HCT116 (cell line): ENCODE measurements at regions of chr18 and their contacts with region 1.

Region 1: GRCh38 chr18:11040823-11041656 is 108.3 kb downstream of the PIEZO2 start:
- DNase-seq: peak; percentile 22
- ATAC-seq: peak; percentile 55; the same call in 1 of the 2 replicates
- H3K4me3 ChIP-seq: no peak overlapping the region
- H3K27ac ChIP-seq: no peak overlapping the region
- H3K4me1 ChIP-seq: no peaks in the 10 kb centered on the region
- H3K27me3 ChIP-seq: peaks cover 15% of the 10 kb centered on the region
- CTCF ChIP-seq: peak; percentile 13 to 57 (median 57); a peak in 5 of 6 replicates
- POLR2A ChIP-seq: no peak
- RAD21 ChIP-seq: peak; percentile 40; the same call in 1 of the 2 replicates

Region 2: DNA sequence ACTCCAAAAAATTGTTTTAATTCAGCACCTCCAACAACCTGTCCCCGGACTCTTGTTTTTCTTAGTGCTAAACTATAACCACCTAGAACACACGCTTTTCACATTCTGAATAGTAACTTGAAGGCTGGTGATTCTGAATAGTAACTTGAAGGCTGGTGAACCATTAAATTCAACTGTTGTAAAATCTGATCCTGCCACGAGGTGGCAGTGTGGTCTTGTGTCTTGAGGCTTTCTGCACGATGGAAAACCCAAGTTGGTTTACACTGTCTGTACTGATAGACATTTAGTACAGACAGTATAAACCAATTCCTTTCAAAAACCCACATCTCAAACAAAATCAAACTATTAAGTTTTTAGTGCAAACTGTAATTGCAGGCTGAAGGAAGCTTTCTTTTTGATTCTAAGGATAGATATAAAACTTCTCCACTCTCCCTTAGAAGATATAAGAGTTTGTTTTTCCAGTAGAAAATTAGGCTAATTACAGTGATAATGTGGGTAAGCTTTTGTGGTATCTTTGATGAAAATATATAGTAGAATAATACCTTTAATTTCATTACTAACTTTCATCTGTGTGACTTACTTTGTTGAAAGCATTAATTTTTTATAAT is 1069.6 kb before region 1 on chr18:
- CTCF ChIA-PET with region 1: no interaction called
- POLR2A ChIA-PET with region 1: no interaction called
- RAD21 ChIA-PET with region 1: no interaction called
- intact Hi-C with region 1: loop called (anchors 2 kb)
- DNase-seq: peak; percentile 60
- ATAC-seq: peak; percentile 83
- H3K4me3 ChIP-seq: no peak overlapping the region
- H3K27ac ChIP-seq: no peak overlapping the region
- H3K4me1 ChIP-seq: no peaks in the 10 kb centered on the region
- H3K27me3 ChIP-seq: no peaks in the 10 kb centered on the region
- CTCF ChIP-seq: peak; percentile 48 to 86 (median 58); a peak in 4 of 6 replicates
- POLR2A ChIP-seq: no peak
- RAD21 ChIP-seq: peak; percentile 91

Region 3: DNA sequence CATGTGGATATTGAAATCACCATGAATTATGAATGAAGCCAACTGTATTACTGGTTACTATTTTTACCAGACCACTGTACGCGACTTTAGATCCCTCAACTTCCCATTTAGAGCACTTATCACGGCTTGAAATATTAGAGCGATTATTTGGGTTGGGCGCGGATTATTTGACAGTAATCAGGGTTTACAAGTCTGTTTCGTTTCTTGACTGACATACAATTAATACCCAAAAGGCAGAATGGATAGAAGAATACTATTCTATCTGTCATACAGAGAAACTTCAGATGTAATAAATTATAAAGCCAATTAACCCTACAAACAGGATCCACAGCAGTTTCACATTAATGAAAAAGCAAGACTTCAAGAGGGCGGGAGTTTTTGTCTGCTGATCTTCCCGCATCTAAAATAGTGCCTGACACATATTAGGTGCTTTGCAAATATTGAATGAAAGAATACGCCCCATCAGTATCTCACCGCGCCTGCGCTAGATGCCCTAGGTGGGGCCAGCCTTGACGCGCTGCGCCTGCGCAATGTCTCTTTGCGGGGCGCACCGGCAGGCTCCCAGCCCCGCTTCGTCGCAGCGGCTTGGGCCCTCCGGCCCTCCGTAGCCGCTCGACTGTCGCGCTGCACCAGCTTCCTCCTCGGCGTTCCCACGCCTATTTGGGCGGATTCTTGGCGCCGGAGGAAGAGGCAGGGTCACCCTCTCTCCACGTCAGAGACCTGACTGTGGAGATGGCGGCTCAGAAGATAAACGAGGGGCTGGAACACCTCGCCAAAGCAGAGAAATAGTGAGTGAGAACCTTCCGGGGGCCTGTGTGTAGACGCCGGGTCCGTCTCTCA is 515.4 kb before region 1 on chr18 and contains the start of gene NAPG:
- CTCF ChIA-PET with region 1: no interaction called
- POLR2A ChIA-PET with region 1: no interaction called
- RAD21 ChIA-PET with region 1: no interaction called
- intact Hi-C with region 1: no loop called
- DNase-seq: peak; percentile 83
- ATAC-seq: peak; percentile 90
- H3K4me3 ChIP-seq: peak within 1 kb of the TSS; percentile 79 to 95
- H3K27ac ChIP-seq: peak within 1 kb of the TSS; percentile 26; the same call in 1 of the 2 replicates
- H3K4me1 ChIP-seq: peaks cover 7 to 17% of the 10 kb centered on the region in 2 experiments
- H3K27me3 ChIP-seq: no peaks in the 10 kb centered on the region
- CTCF ChIP-seq: no peak
- POLR2A ChIP-seq: no peak
- RAD21 ChIP-seq: no peak
- total RNA-seq, gene NAPG: 28.0 TPM

Region 4: GRCh38 chr18:10787293-10787901 is 253.6 kb before region 1 on chr18:
- CTCF ChIA-PET with region 1: no interaction called
- POLR2A ChIA-PET with region 1: no interaction called
- RAD21 ChIA-PET with region 1: no interaction called
- intact Hi-C with region 1: loop called (anchors 5 kb)
- DNase-seq: peak; percentile 51
- ATAC-seq: peak; percentile 82
- H3K4me3 ChIP-seq: no peak overlapping the region
- H3K27ac ChIP-seq: no peak overlapping the region
- H3K4me1 ChIP-seq: no peaks in the 10 kb centered on the region
- H3K27me3 ChIP-seq: peaks cover 45% of the 10 kb centered on the region
- CTCF ChIP-seq: peak; percentile 25 to 92 (median 89); a peak in 5 of 6 replicates
- POLR2A ChIP-seq: no peak
- RAD21 ChIP-seq: peak; percentile 60